ENCODE measurements at regions of chr20 and their contacts with region 1.

Region 1: GRCh38 chr20:8082025-8082424 is 50.0 kb upstream of the PLCB1 start:
- DNase-seq: no peak
- H3K4me3 ChIP-seq: no peak overlapping the region
- H3K27me3 ChIP-seq: no peaks in the 10 kb centered on the region
- CTCF ChIP-seq: peak; percentile 44

Region 2: GRCh38 chr20:8094415-8094818 is 12.4 kb after region 1 on chr20:
- CTCF ChIA-PET with region 1: interaction called, 11 read pairs
- POLR2A ChIA-PET with region 1: no interaction called
- DNase-seq: peak; percentile 35
- H3K4me3 ChIP-seq: no peak overlapping the region
- H3K27me3 ChIP-seq: no peaks in the 10 kb centered on the region
- CTCF ChIP-seq: no peak

Region 3: DNA sequence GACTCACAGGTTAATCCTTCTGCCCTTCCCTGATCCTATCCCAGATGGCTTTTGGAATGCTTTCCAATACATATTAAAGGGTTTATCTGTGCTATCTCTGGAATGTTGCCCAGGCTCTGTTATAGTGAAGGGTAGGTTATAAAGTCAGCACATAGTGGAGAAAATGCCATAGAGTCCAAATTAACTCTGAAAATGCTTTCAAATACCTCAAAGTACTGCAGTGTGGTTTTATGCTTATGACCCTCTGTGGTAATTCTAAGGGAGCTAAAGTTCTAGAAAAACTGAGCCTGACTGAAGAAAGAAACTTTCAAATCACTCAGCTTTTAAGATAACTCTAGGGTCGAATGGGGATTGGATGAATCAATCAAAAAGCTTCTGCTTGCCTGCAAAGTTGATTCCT is 209.8 kb after region 1 on chr20:
- CTCF ChIA-PET with region 1: no interaction called
- POLR2A ChIA-PET with region 1: no interaction called
- DNase-seq: peak; percentile 37
- H3K4me3 ChIP-seq: no peak overlapping the region
- H3K27me3 ChIP-seq: no peaks in the 10 kb centered on the region
- CTCF ChIP-seq: no peak